OCI-LY7 (cell line): ENCODE measurements at regions of chr6 and their contacts with region 1.

Region 1: GRCh38 chr6:125812394-125813292 is 21.9 kb downstream of the NCOA7 start:
- DNase-seq: no peak
- H3K4me3 ChIP-seq: no peak overlapping the region
- H3K27ac ChIP-seq: no peak overlapping the region
- H3K4me1 ChIP-seq: peaks cover 81% of the 10 kb centered on the region
- CTCF ChIP-seq: no peak

Region 2: DNA sequence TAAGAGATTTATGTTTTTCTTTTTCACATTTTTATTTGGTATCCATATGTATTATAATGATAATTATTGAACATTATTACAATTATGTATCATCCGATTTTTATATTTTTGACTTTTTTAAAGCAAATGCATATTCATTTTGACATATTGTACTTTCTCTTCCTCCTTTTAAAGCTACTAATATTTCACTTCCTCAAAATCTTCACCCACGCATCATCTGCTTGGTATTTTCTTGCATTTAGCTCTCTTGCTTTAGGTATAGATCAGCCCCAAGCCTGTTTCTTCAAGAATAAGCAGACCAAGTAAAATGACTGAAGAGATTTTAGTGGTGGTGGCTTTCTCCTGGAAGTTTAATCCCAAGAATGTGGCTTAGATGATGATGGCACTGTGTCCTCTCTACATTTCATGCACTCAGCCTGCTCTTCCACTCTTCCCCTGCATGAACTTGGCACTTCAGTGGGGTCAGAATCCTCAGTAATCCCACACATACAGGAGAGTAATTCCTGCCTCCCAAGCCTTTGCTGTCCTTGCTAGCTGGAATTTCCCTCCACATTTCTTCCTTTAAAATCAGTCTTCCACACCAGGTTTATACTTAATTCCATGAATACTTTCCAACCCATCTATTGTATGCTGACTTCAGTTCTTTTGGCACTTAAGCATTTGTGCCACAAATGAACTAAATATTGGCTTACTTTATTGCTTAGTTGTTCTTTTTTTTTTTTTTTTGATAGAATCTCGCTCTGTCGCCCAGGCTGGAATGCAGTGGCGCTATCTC is 13.7 kb before region 1 on chr6:
- CTCF ChIA-PET with region 1: interaction called, 6 read pairs
- POLR2A ChIA-PET with region 1: interaction called, 47 read pairs
- intact Hi-C with region 1: no loop called
- DNase-seq: peak; percentile 83
- H3K4me3 ChIP-seq: peak overlapping the region; percentile 58
- H3K27ac ChIP-seq: peak overlapping the region; percentile 97
- H3K4me1 ChIP-seq: peaks cover 99% of the 10 kb centered on the region
- CTCF ChIP-seq: no peak

Region 3: DNA sequence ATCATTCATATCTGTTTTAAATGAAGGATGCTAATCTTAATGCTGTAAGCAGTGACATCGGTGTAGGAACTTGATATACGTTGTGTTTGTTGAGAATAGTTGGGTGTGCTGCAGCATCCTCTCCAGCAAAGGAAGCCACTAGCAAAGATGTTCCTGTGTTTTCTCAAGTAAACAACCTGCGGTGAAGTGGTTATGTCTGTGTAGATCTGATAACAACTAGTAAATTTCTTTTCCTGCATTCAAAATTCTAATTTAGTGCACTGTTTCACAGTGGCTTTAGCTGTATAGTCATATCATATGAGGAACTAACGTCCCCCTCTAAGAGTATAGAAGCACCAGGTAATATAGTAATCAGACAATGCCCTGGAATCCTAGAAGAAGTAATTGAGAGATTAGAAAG is 16.8 kb after region 1 on chr6:
- CTCF ChIA-PET with region 1: interaction called, 3 read pairs
- POLR2A ChIA-PET with region 1: interaction called, 12 read pairs
- intact Hi-C with region 1: no loop called
- DNase-seq: no peak
- H3K4me3 ChIP-seq: no peak overlapping the region
- H3K27ac ChIP-seq: no peak overlapping the region
- H3K4me1 ChIP-seq: peaks cover 8% of the 10 kb centered on the region
- CTCF ChIP-seq: no peak